ENCODE measurements at regions of chr1 and their contacts with region 1.

Region 1: GRCh38 chr1:147494998-147495580 is 46.2 kb upstream of the BCL9 start:
- DNase-seq: peak; percentile 69 to 79 (median 75)
- ATAC-seq: peak; percentile 83 to 95 (median 93)
- H3K4me3 ChIP-seq: no peak overlapping the region
- H3K27ac ChIP-seq: no peak overlapping the region
- H3K4me1 ChIP-seq: peaks cover 0 to 23% (median 12%) of the 10 kb centered on the region in 12 donors
- H3K27me3 ChIP-seq: no peaks in the 10 kb centered on the region
- CTCF ChIP-seq: peak; percentile 89 to 96 (median 94)
- POLR2A ChIP-seq: no peak

Region 2: GRCh38 chr1:147545133-147545532 is 50.0 kb after region 1 on chr1:
- intact Hi-C with region 1: loop called in 6 of 10 experiments (anchors 5 kb)
- DNase-seq: peak in 3 of 5 donors; percentile 9 to 30 (median 26)
- ATAC-seq: no peak
- H3K4me3 ChIP-seq: no peak overlapping the region
- H3K27ac ChIP-seq: peak overlapping the region in 2 of 12 donors; percentile 18 to 21
- H3K4me1 ChIP-seq: peaks cover 0 to 53% (median 18%) of the 10 kb centered on the region in 12 donors
- H3K27me3 ChIP-seq: peaks cover 0 to 3% (median 0%) of the 10 kb centered on the region in 9 donors
- CTCF ChIP-seq: no peak
- POLR2A ChIP-seq: no peak

Region 3: GRCh38 chr1:147599362-147600118 is 104.5 kb after region 1 on chr1:
- intact Hi-C with region 1: loop called in 2 of 10 experiments (anchors 1 to 5 kb)
- DNase-seq: peak; percentile 98 to 99 (median 98)
- ATAC-seq: peak; percentile 89 to 96 (median 95)
- H3K4me3 ChIP-seq: peak overlapping the region; percentile 62 to 99 (median 78)
- H3K27ac ChIP-seq: peak overlapping the region; percentile 62 to 97 (median 90)
- H3K4me1 ChIP-seq: peaks cover 0 to 34% (median 16%) of the 10 kb centered on the region in 12 donors
- H3K27me3 ChIP-seq: no peaks in the 10 kb centered on the region
- CTCF ChIP-seq: no peak
- POLR2A ChIP-seq: peak; percentile 91 to 98

Region 4: DNA sequence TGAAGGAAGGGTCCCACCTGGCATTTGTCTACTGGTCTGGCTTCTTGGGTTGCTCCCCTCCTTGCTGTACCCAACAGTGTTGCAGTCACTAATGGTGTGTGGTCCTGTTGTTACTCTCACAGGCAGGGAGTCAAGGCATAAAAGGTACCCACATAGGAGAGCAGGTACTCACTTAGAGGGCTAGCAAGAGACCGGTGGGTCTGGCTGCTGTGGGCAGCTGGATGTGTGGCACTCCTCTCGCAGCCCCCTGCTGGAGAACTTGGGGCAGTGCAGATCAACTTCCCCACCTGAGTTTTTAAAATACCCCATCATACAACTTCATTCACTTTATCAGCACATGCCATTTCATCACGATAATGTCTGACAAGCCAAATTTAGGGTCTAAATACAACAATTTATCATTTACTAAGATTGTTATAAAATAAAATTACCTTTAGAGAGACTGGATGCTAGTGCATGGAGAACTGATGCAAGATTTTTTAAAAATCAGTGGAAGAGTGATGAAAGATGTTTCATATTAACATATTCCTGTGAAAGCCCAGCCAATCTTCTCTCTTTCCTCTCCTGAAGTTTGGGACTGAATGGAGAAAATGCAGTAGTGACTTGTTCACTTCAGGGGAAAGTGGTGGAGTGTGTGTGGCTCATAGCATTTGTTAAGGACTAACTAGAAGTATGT is 132.5 kb after region 1 on chr1:
- intact Hi-C with region 1: loop called (anchors 1 to 5 kb)
- DNase-seq: peak in 3 of 5 donors; percentile 48 to 62 (median 58)
- ATAC-seq: peak in 3 of 4 donors; percentile 71 to 78 (median 77)
- H3K4me3 ChIP-seq: no peak overlapping the region
- H3K27ac ChIP-seq: no peak overlapping the region
- H3K4me1 ChIP-seq: peaks cover 0 to 24% (median 0%) of the 10 kb centered on the region in 12 donors
- H3K27me3 ChIP-seq: no peaks in the 10 kb centered on the region
- CTCF ChIP-seq: peak; percentile 84 to 95 (median 91)
- POLR2A ChIP-seq: no peak

Region 5: DNA sequence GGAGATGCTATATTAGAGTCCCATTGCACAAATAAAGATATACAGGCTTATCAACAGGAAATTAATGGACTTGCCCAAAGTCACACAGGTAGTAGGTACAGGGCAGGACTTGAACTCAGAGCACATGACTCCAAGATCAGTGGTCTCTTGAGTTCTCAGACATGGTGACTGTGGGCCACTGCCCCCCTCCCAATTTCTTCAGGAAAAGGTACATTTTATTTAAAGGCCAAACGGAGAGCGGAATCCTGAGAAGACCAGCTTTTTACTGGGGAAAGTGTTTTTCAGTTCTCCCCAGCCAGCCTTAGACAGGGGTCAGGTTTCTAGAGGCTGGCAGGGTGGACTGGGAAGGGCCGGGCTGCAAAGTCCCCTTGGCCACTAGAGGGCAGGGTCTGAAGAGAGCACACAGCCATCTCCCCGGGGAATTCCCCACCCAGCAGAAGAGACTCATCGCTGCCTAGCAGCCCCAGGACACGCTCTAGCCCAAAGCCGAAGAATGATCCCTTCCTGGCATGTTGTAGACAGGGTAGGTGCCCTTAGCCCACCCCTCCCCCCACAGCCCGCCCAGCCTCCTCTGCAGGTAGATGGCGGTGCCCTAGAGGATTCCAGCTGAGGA is 145.6 kb after region 1 on chr1:
- intact Hi-C with region 1: loop called in 8 of 10 experiments (anchors 1 to 5 kb)
- DNase-seq: peak; percentile 63 to 77 (median 73)
- ATAC-seq: peak; percentile 85 to 96 (median 94)
- H3K4me3 ChIP-seq: peak overlapping the region in 1 of 12 donors; percentile 18
- H3K27ac ChIP-seq: no peak overlapping the region
- H3K4me1 ChIP-seq: peaks cover 0 to 23% (median 6%) of the 10 kb centered on the region in 12 donors
- H3K27me3 ChIP-seq: no peaks in the 10 kb centered on the region
- CTCF ChIP-seq: peak; percentile 66 to 87 (median 74)
- POLR2A ChIP-seq: no peak

Region 6: GRCh38 chr1:147700042-147701006 is 205.2 kb after region 1 on chr1:
- intact Hi-C with region 1: loop called in 3 of 10 experiments (anchors 5 to 10 kb)
- DNase-seq: peak; percentile 53 to 61 (median 57)
- ATAC-seq: peak; percentile 81 to 90 (median 88)
- H3K4me3 ChIP-seq: no peak overlapping the region
- H3K27ac ChIP-seq: peak overlapping the region in 1 of 12 donors; percentile 31
- H3K4me1 ChIP-seq: peaks cover 0 to 7% (median 0%) of the 10 kb centered on the region in 12 donors
- H3K27me3 ChIP-seq: no peaks in the 10 kb centered on the region
- CTCF ChIP-seq: peak; percentile 65 to 87 (median 77)
- POLR2A ChIP-seq: no peak

Region 7: DNA sequence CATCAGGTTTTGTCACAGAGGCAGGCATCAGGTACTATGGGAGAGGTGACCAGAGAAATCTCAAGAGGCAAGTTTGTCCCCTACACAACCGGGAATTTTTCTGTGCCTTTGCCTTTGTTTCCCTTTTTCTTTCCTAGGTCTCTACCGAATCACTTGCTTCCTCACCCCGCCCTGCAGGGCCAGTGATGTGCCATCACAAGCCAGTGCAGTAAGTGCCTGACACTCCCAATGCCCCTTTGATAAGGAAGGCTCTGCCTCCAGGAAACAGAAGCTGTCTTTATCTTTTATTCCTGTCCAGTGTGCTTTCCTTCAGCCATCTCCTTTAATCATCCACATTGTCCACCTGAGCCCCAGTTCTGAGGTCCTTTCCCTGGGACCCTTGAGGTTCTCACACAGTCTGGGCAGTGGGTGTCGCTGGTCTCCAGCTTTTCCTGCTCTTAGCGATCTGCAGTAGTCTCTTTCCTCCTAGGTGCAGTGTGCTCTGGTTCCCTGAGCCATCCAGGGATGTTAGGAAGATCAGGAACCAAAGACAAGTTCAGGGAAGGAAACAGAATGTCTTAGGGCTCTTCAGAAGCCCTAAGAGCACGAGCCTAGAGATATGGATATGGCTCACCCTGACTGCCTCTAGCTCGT is 228.7 kb after region 1 on chr1:
- intact Hi-C with region 1: loop called in 1 of 10 experiments (anchors 10 kb)
- DNase-seq: peak; percentile 38 to 66 (median 51)
- ATAC-seq: peak; percentile 83 to 97 (median 94)
- H3K4me3 ChIP-seq: no peak overlapping the region
- H3K27ac ChIP-seq: no peak overlapping the region
- H3K4me1 ChIP-seq: peaks cover 0 to 11% (median 0%) of the 10 kb centered on the region in 12 donors
- H3K27me3 ChIP-seq: no peaks in the 10 kb centered on the region
- CTCF ChIP-seq: peak; percentile 35 to 79 (median 72)
- POLR2A ChIP-seq: no peak

Measured in heart left ventricle (tissue), 16 donors.